AG04449 (cell line): ENCODE measurements at regions of chr4 and their contacts with region 1.

Region 1: DNA sequence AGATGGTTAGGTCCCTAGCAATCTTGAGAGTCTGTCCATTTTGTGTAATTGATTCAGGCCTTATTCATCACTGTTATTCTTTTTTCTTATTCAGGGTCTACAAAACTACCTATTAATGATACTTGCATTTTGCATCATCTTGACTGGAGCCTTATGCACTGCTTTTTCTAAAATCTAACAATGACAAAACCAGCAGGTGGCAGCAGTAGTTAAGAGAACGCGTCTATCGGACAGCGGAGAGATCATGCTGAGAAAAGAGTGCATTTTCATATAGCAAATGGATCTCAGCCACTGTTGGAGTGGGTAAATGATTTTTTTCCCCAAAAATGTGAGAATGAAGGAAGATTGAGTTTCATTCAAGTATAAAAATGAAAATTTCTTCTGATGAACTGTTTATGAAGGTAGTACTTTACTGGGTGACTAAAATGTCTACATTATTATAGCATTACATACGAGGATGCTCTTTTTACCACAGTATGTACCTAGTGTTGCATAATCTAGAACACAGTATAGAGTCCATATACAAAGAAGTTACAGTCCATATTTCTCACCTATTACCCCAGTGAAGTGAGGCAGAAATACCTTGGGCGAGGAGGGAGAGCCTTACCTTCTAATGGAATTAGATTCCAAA is 43.2 kb downstream of the TMEM144 start:
- DNase-seq: peak; percentile 9
- H3K4me3 ChIP-seq: no peak overlapping the region
- CTCF ChIP-seq: peak; percentile 70

Region 2: DNA sequence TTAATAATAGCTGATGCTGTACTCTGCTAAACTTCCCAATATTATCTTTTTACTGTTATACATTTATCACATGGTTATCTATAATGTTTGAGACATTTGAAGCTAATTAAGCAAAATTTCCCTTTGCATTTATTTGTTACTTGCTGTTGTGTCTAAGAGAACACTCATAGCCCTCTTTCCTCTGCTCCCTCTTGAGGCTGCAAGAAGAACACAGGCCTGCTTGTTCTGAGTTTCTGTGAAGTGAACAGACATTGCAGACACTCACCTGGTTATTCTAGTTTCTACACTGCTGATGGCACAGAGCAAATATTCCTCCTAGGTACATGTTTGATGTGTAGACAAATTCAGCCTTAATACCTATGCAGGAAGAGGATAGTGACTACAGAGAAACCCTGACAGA is 448.5 kb before region 1 on chr4:
- CTCF ChIA-PET with region 1: no interaction called
- POLR2A ChIA-PET with region 1: no interaction called
- DNase-seq: no peak
- H3K4me3 ChIP-seq: no peak overlapping the region
- CTCF ChIP-seq: no peak

Region 3: DNA sequence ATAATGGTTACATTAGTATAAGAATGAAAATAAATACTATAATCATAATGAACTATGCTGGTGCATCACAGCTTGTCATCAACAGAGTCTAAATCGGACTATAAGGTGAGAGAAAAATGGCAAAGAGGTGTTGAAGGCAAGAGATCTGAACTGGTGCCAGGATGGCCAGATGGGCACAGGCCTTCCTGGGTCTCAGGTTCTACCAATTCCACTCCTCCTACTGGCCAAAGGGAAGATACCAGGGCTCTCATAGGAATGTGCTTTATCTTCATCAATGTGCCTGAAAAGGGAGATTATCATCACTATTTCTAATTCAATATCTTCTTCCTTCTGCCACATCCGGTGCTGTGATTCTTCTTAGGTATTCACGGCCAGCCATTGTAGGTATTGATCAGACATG is 188.3 kb before region 1 on chr4:
- CTCF ChIA-PET with region 1: no interaction called
- POLR2A ChIA-PET with region 1: no interaction called
- DNase-seq: no peak
- H3K4me3 ChIP-seq: no peak overlapping the region
- CTCF ChIP-seq: no peak

Region 4: DNA sequence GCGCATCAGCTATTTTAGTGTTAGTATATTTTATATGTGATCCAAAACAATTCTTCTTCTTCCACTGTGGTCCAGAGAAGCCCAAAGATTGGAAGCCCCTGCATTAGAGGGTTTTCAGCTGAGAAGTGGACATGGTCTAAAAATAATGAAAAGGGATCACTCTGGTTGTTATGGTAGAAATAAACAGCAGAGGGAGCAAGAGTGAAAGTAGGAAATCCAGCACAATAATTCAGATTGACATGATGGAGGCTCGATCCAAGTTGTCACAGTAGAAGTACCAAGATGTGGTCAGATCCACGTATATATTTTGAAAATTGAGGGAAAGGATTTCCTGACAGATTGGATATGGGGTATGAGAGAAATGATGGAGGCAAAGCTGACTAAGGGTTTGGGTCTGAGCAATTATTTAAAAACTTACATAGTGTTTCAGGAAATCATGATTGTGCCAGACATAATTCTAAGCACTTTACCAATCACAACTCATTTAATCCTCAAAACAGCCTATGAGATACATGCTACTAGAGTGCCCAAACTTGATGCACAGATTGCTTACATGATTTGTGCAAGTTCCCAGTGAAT is 60.2 kb before region 1 on chr4:
- CTCF ChIA-PET with region 1: interaction called, 55 read pairs
- POLR2A ChIA-PET with region 1: no interaction called
- DNase-seq: no peak
- H3K4me3 ChIP-seq: no peak overlapping the region
- CTCF ChIP-seq: peak; percentile 17

Region 5: DNA sequence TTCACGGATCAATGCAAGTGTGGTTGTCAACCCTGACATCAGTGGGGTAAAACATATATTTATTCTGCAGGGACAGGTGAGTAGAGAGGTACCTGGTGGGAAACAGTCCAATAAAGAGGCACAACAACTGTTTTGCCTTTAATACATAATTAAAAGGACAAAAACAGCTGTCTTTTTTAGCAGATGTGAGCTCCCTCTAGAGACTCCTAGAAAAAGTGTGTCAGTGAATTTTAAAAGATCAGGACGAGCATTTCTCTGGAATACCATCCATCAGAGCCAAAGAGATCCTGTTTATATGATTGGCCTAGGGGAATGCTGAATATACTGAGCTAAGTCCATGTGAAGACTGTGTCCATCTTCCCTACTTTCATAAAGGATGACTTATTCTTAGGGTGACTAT is 15.1 kb after region 1 on chr4:
- CTCF ChIA-PET with region 1: interaction called, 27 read pairs
- POLR2A ChIA-PET with region 1: no interaction called
- DNase-seq: no peak
- H3K4me3 ChIP-seq: no peak overlapping the region
- CTCF ChIP-seq: no peak

Region 6: DNA sequence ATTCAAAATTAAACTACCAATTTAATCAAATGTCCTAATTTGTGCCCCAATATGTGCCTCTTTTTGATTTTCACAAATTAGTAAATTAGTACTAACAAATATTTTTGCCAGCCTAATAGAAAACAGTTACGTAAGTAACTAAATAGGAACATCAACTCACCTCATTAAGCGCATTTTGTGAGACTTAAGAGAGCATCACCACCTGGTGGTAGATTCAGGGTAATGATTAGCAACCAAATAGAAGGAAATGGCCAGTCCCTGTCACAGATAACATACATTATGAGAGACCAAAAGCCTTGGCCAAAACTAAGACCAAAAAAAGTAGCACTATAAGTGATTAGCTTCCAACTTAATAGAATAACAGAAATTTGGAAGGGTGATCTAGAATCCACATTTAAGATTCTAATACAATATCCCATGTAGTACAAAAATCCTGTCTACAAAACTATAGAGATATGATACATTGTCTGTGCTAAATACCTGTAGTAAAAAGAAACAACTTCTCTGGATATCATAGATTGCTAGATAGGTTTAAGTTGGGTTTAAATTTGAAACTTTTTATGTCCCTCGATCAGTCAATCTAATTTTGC is 371.5 kb after region 1 on chr4:
- CTCF ChIA-PET with region 1: interaction called, 121 read pairs
- POLR2A ChIA-PET with region 1: no interaction called
- DNase-seq: no peak
- H3K4me3 ChIP-seq: no peak overlapping the region
- CTCF ChIP-seq: peak; percentile 49

Region 7: DNA sequence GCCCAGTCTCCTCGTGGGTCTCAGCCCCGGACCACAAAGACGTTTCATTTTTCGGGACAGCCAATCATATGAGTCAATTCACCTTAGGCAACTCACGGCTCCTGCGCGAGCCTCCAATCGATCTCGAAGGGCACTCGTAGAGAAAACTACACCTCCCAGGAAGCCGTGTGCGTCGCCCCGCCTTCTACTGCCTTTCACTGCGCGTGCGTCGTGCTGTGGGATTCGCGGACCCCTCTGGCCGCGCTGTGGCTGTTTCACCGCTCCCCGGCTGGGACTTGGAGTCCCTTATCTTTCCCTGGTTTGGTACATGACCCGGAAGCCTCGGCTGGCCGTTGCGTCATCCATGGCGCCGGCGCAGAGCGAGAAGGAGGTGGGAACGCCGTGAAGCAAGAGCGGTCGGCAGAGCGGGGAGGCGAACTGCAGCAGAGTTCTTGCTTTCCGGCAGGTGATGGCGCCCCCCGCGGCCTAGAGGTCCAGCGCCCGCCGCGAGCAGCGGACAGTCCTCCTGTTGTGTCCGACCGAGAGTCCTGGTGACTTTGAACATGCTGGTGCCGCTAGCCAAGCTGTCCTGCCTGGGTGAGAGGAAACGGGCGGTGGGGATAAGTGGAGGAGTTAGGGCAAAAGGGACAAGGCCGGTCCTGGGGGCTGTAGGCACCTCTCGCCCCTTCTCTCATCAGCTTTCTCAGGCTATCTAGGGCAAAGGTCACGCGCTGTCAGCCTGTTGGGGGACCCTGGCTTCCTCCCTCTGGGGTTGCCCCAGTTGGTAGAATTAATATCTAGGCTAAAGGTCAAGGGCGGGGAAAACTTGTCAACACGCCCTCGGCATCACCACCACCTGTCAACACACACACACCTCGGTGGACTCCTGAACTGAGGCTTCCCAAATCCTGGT is 418.7 kb after region 1 on chr4 and contains the start of gene ETFDH:
- CTCF ChIA-PET with region 1: interaction called, 14 read pairs
- POLR2A ChIA-PET with region 1: no interaction called
- DNase-seq: peak; percentile 96
- H3K4me3 ChIP-seq: peak within 1 kb of the TSS; percentile 89
- CTCF ChIP-seq: peak; percentile 87